SK-N-SH (cell line): ENCODE measurements at regions of chr6 and their contacts with region 1.

Region 1: DNA sequence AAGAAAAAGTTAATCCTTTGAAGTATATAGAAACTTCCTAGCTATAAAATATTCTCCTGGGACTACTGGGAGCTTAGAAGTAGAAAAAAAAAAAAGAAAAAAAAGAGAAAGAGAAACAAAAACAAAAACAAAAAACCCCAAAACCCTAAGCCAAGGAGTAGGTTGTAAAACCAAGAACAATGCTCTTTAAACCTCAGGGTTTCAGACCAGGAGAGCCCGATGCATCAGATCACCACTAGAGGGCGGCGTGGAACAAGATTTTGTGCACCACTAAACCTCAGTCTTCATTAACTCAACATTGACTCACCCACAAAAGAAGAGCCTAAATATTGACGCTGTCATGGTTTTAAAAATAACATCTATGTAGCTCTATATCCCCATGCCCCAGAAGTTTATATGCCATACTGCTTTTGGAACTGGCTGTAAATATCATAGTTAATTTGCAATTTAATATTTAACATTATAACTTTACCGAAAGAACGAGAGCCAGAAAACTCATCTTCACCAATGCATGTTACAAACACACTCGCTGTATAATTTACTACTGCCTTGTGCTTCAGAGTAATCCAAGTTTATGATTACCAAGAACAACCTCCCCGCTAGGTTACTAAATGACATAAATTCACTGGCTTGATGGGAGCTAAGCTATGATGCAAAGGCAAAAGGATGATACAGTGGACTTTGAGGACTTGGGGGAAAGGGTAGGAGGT is 19.2 kb downstream of the MCUR1 start:
- DNase-seq: peak; percentile 73
- H3K4me3 ChIP-seq: no peak overlapping the region; a peak in 1 of 4 replicates
- H3K27ac ChIP-seq: peak overlapping the region in 1 of 2 experiments; percentile 48; a peak in 2 of 4 replicates
- H3K4me1 ChIP-seq: peaks cover 0 to 6% of the 10 kb centered on the region in 2 experiments; a peak in 1 of 4 replicates
- H3K27me3 ChIP-seq: no peaks in the 10 kb centered on the region
- CTCF ChIP-seq: peak; percentile 97
- EP300 ChIP-seq: no peak
- RAD21 ChIP-seq: peak; percentile 89

Region 2: GRCh38 chr6:13696226-13696625 is 99.0 kb before region 1 on chr6:
- CTCF ChIA-PET with region 1: no interaction called
- POLR2A ChIA-PET with region 1: no interaction called
- DNase-seq: no peak
- H3K4me3 ChIP-seq: no peak overlapping the region
- H3K27ac ChIP-seq: peak overlapping the region in 1 of 2 experiments; percentile 57; a peak in 2 of 4 replicates
- H3K4me1 ChIP-seq: peaks cover 0 to 33% of the 10 kb centered on the region in 2 experiments; a peak in 2 of 4 replicates
- H3K27me3 ChIP-seq: no peaks in the 10 kb centered on the region
- CTCF ChIP-seq: no peak
- EP300 ChIP-seq: no peak
- RAD21 ChIP-seq: no peak

Region 3: DNA sequence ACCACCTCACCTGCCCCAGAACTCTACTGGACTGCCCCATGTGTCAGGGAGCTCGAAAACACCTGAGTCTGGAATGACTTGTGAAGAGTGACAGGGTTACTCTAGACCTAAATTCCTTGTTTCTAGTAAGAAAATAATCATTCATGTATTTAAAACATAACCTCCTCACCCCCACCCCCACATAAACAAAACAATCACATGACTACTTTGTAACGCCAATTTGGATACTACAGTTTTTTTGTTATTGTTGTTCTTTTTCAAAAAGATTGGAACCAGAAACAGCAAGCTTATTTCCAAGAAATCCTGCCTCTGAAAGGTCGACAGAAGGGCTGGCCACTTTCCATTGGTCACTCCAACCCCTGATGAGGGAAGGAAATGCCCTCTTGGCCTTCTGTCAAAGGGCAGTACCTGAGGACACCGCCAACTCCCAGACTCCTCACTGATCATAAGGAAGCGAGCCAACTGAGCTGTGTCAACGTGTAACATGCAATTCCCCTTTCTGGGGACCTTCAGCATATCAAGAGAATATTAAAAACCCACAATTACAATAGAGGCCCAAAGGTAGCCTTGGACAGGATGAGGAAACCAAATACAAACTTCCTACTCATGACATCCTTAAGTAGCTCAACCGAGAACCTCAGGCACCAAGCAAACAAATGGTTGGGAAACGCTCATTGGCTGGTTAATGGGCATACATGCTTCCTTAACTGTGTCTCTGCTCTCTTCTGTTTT is 16.6 kb after region 1 on chr6:
- CTCF ChIA-PET with region 1: interaction called, 20 read pairs
- POLR2A ChIA-PET with region 1: no interaction called
- DNase-seq: no peak
- H3K4me3 ChIP-seq: no peak overlapping the region
- H3K27ac ChIP-seq: peak overlapping the region in 1 of 2 experiments; percentile 61; a peak in 2 of 4 replicates
- H3K4me1 ChIP-seq: peaks cover 7 to 26% of the 10 kb centered on the region in 2 experiments; a peak in 3 of 4 replicates
- H3K27me3 ChIP-seq: no peaks in the 10 kb centered on the region
- CTCF ChIP-seq: no peak
- EP300 ChIP-seq: no peak
- RAD21 ChIP-seq: no peak

Region 4: GRCh38 chr6:13859871-13860555 is 64.8 kb after region 1 on chr6:
- CTCF ChIA-PET with region 1: interaction called, 12 read pairs
- POLR2A ChIA-PET with region 1: no interaction called
- DNase-seq: peak; percentile 61
- H3K4me3 ChIP-seq: peak overlapping the region; percentile 35 to 49; a peak in 3 of 4 replicates
- H3K27ac ChIP-seq: peak overlapping the region in 1 of 2 experiments; percentile 74; a peak in 2 of 4 replicates
- H3K4me1 ChIP-seq: no peaks in the 10 kb centered on the region
- H3K27me3 ChIP-seq: no peaks in the 10 kb centered on the region
- CTCF ChIP-seq: no peak
- EP300 ChIP-seq: no peak
- RAD21 ChIP-seq: no peak